IMR-90 (cell line): ENCODE measurements at regions of chr5 and their contacts with region 1.

Region 1: GRCh38 chr5:159987031-159987674 is 21.8 kb upstream of the TTC1 start:
- DNase-seq: peak; percentile 58
- ATAC-seq: peak; percentile 94
- H3K4me3 ChIP-seq: peak overlapping the region; percentile 39
- H3K27ac ChIP-seq: no peak overlapping the region
- H3K4me1 ChIP-seq: peaks cover 4% of the 10 kb centered on the region; the same call in 1 of the 2 replicates
- H3K27me3 ChIP-seq: peaks cover 4% of the 10 kb centered on the region
- CTCF ChIP-seq: peak; percentile 83
- POLR2A ChIP-seq: 0 out of 2 replicates have a peak, but pooled peaks have one; percentile 26
- RAD21 ChIP-seq: peak; percentile 87

Region 2: DNA sequence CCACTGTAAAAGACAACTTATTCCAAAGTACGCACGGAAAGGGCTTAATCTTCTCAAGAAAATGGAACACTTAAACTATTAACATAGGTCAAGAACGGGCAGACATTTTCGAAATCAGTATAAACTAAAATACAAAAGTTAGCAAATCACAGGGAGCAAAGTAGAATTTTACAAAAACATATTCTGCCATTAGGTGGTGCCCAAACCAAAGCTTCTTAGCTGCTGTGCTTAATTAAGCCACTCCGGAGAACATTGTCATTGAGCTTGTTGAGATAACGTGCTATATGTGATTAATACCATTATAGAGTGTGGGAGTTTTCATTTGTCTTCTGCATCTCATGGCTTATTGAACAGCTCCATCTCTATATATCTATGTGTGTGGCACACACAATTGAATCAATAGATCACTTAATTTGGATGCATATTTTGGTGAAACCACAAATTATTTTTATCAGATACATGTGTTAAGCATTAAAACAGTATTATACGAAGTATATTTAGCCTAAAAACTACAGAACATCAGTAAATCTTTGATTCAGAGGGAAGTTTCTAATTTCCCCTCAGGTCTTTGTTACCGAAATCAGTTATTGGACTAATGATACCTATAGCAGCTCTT is 700.6 kb before region 1 on chr5:
- CTCF ChIA-PET with region 1: interaction called, 3 read pairs
- POLR2A ChIA-PET with region 1: no interaction called
- dilution Hi-C with region 1: no loop called
- in situ Hi-C with region 1: loop called (anchors 10 kb)
- intact Hi-C with region 1: no loop called
- DNase-seq: peak; percentile 48
- ATAC-seq: peak; percentile 53; the same call in 1 of the 2 replicates
- H3K4me3 ChIP-seq: no peak overlapping the region
- H3K27ac ChIP-seq: no peak overlapping the region
- H3K4me1 ChIP-seq: no peaks in the 10 kb centered on the region
- H3K27me3 ChIP-seq: no peaks in the 10 kb centered on the region
- CTCF ChIP-seq: peak; percentile 56
- POLR2A ChIP-seq: no peak
- RAD21 ChIP-seq: peak; percentile 77

Region 3: GRCh38 chr5:159331093-159331973 is 655.8 kb before region 1 on chr5:
- CTCF ChIA-PET with region 1: no interaction called
- POLR2A ChIA-PET with region 1: no interaction called
- dilution Hi-C with region 1: no loop called
- in situ Hi-C with region 1: no loop called
- intact Hi-C with region 1: loop called (anchors 1 kb)
- DNase-seq: peak; percentile 19
- ATAC-seq: peak; percentile 68
- H3K4me3 ChIP-seq: peak overlapping the region; percentile 39
- H3K27ac ChIP-seq: no peak overlapping the region; the same call in 1 of the 2 replicates
- H3K4me1 ChIP-seq: peaks cover 4% of the 10 kb centered on the region; the same call in 1 of the 2 replicates
- H3K27me3 ChIP-seq: no peaks in the 10 kb centered on the region
- CTCF ChIP-seq: peak; percentile 48
- POLR2A ChIP-seq: no peak
- RAD21 ChIP-seq: 0 out of 2 replicates have a peak, but pooled peaks have one; percentile 28

Region 4: DNA sequence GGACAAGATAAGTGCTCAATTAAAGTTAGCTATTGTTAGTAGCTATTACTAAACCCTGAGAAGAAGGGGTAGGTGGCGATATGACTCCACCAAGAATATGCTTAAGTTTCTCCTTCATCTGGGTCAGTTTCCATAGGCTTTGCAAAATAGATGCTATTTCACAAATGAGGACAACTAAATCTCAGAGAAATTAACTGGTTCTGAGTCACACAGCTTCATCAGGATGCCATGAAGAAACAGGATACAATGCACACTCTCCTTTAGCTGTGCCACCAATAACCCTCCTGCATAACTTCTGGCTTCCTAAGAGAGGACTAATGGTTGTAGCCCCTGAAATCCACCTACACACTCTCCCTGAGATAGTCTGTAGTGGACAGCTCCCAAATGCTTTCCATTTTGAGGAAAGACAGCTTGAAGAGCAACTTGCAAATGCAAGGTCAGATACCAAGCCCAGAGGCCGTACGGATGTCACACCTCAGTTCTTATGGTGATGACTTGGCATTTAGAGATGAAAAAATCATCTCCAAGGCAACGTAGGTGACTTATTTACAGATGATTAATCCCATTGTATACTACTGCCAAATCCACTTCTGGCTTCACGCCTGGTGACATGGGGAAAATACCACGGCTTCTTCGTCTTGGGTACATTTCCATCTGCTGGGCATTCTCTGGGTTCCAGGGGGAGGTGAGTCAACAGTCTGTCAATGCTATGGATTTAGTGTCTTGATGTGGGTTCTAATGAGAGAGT is 405.5 kb before region 1 on chr5:
- CTCF ChIA-PET with region 1: no interaction called
- POLR2A ChIA-PET with region 1: no interaction called
- dilution Hi-C with region 1: no loop called
- in situ Hi-C with region 1: no loop called
- intact Hi-C with region 1: loop called (anchors 5 kb)
- DNase-seq: peak; percentile 45
- ATAC-seq: peak; percentile 53
- H3K4me3 ChIP-seq: no peak overlapping the region
- H3K27ac ChIP-seq: no peak overlapping the region
- H3K4me1 ChIP-seq: peaks cover 5% of the 10 kb centered on the region
- H3K27me3 ChIP-seq: peaks cover 4% of the 10 kb centered on the region
- CTCF ChIP-seq: 0 out of 2 replicates have a peak, but pooled peaks have one; percentile 22
- POLR2A ChIP-seq: no peak
- RAD21 ChIP-seq: no peak

Region 5: GRCh38 chr5:160175438-160176218 is 188.5 kb after region 1 on chr5:
- CTCF ChIA-PET with region 1: no interaction called
- POLR2A ChIA-PET with region 1: no interaction called
- dilution Hi-C with region 1: no loop called
- in situ Hi-C with region 1: no loop called
- intact Hi-C with region 1: no loop called
- DNase-seq: peak; percentile 41
- ATAC-seq: peak; percentile 66
- H3K4me3 ChIP-seq: no peak overlapping the region
- H3K27ac ChIP-seq: no peak overlapping the region
- H3K4me1 ChIP-seq: peaks cover 5% of the 10 kb centered on the region
- H3K27me3 ChIP-seq: no peaks in the 10 kb centered on the region
- CTCF ChIP-seq: no peak
- POLR2A ChIP-seq: no peak
- RAD21 ChIP-seq: no peak